Dendritic cell treated with granulocyte-macrophage colony-stimulating factor and Interleukin-4, amounts not matched to agents 40 ng/mL and 50 ng/mL, for 4 days (primary cell): ENCODE measurements at regions of chr11 and their contacts with region 1.

Region 1: GRCh38 chr11:34405079-34405858 is 33.5 kb upstream of the CAT start:
- H3K4me3 Mint-ChIP-seq: peak overlapping the region; percentile 76
- H3K27ac Mint-ChIP-seq: peak overlapping the region; percentile 74
- H3K4me1 Mint-ChIP-seq: peaks cover 20% of the 10 kb centered on the region
- H3K27me3 Mint-ChIP-seq: peaks cover 2% of the 10 kb centered on the region

Region 2: DNA sequence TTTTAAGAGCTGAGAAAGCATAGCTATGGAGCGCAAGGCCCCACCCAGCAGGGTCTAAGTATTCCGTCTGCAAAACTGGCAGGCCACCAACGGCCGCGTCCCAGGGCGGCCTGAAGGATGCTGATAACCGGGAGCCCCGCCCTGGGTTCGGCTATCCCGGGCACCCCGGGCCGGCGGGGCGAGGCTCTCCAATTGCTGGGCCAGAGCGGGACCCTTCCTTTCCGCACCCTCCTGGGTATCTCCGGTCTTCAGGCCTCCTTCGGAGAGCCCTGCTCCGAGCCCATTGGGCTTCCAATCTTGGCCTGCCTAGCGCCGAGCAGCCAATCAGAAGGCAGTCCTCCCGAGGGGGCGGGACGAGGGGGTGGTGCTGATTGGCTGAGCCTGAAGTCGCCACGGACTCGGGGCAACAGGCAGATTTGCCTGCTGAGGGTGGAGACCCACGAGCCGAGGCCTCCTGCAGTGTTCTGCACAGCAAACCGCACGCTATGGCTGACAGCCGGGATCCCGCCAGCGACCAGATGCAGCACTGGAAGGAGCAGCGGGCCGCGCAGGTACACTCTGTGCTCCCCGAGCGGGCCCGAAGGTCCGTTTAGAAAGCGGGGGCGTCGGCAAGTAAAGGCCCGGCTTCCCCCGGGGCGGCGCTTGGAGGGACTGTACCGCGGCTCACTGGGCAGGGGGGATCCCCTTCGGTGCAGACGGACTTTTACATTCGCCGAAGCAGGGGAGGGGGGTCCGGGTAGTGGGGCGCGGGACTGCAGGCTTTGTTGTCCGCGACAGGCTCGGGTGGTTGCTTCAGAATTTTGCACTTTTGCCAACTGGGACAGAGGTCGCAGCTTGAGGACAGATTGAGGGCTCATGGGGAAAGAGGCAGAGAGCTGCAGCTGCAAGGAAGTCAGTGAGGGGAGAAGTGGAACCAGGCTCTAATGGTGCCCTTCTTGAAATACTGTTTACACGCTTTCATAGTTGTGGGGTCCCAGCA is 33.5 kb after region 1 on chr11 and contains the start of gene CAT:
- intact Hi-C with region 1: loop called (anchors 2 kb)
- H3K4me3 Mint-ChIP-seq: peak within 1 kb of the TSS; percentile 91
- H3K27ac Mint-ChIP-seq: peak within 1 kb of the TSS; percentile 97
- H3K4me1 Mint-ChIP-seq: peaks cover 41% of the 10 kb centered on the region
- H3K27me3 Mint-ChIP-seq: no peaks in the 10 kb centered on the region